Activated naive CD4-positive, alpha-beta T cell treated with anti-CD3 and anti-CD28 coated beads for 36 hours (primary cell): ENCODE measurements at regions of chr6 and their contacts with region 1.

Region 1: GRCh38 chr6:45584127-45584526 is 206.4 kb upstream of the SUPT3H start:
- DNase-seq: no peak
- H3K4me3 Mint-ChIP-seq: no peak overlapping the region
- H3K27ac Mint-ChIP-seq: no peak overlapping the region
- H3K4me1 Mint-ChIP-seq: peaks cover 46% of the 10 kb centered on the region
- H3K27me3 Mint-ChIP-seq: no peaks in the 10 kb centered on the region

Region 2: GRCh38 chr6:45558858-45559257 is 25.3 kb before region 1 on chr6:
- CTCF ChIA-PET with region 1: no interaction called
- intact Hi-C with region 1: loop called (anchors 2 kb)
- DNase-seq: no peak
- H3K4me3 Mint-ChIP-seq: no peak overlapping the region
- H3K27ac Mint-ChIP-seq: no peak overlapping the region
- H3K4me1 Mint-ChIP-seq: peaks cover 22% of the 10 kb centered on the region
- H3K27me3 Mint-ChIP-seq: no peaks in the 10 kb centered on the region

Region 3: GRCh38 chr6:45595010-45595851 is 11.1 kb after region 1 on chr6:
- CTCF ChIA-PET with region 1: no interaction called
- intact Hi-C with region 1: no loop called
- DNase-seq: no peak
- H3K4me3 Mint-ChIP-seq: no peak overlapping the region
- H3K27ac Mint-ChIP-seq: no peak overlapping the region
- H3K4me1 Mint-ChIP-seq: peaks cover 37% of the 10 kb centered on the region
- H3K27me3 Mint-ChIP-seq: no peaks in the 10 kb centered on the region